Activated naive CD4-positive, alpha-beta T cell treated with anti-CD3 and anti-CD28 coated beads for 36 hours (primary cell): ENCODE measurements at regions of chr14 and their contacts with region 1.

Region 1: GRCh38 chr14:100383727-100384158 is 60.6 kb downstream of the SLC25A47 start:
- DNase-seq: peak; percentile 73
- H3K4me3 Mint-ChIP-seq: no peak overlapping the region
- H3K27ac Mint-ChIP-seq: no peak overlapping the region
- H3K4me1 Mint-ChIP-seq: peaks cover 24% of the 10 kb centered on the region
- H3K27me3 Mint-ChIP-seq: no peaks in the 10 kb centered on the region

Region 2: GRCh38 chr14:100393906-100394732 is 10.4 kb after region 1 on chr14:
- CTCF ChIA-PET with region 1: interaction called, 11 read pairs
- intact Hi-C with region 1: no loop called
- DNase-seq: no peak
- H3K4me3 Mint-ChIP-seq: no peak overlapping the region
- H3K27ac Mint-ChIP-seq: no peak overlapping the region
- H3K4me1 Mint-ChIP-seq: peaks cover 3% of the 10 kb centered on the region
- H3K27me3 Mint-ChIP-seq: no peaks in the 10 kb centered on the region

Region 3: DNA sequence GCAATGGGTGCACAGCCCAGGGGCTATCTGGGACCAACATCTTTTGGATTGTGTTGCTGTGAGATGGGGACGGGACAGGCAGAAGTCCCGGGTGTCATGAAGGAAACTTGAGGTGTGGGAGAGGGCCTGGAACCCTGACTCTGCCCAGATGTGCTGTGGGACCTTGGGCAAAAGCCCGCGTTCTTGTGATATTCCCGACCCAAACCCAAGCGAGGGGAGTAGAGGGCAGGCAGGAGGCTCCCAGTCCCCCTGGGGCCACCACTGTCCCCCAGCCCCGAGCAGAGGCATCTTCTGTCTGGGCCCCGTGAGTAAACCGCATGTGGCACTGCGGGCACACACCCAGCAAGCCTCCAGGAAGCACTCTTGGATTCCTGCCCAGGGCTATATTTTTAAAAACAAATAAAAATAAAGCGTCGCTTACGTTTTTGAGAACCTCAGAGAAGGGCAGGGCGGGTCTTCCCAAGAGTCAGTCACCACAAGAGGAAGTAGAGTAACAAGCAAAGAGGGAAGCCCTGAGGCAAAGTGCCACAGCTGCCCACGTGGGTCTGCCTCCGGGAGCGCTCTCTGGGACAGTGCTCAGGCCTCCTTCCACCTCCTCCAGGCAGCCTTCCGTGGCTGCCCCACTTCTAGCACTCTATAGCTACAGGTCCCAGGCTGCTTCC is 164.0 kb after region 1 on chr14:
- CTCF ChIA-PET with region 1: interaction called, 3 read pairs
- intact Hi-C with region 1: loop called (anchors 2 kb)
- DNase-seq: peak; percentile 64
- H3K4me3 Mint-ChIP-seq: peak overlapping the region; percentile 84
- H3K27ac Mint-ChIP-seq: no peak overlapping the region
- H3K4me1 Mint-ChIP-seq: peaks cover 26% of the 10 kb centered on the region
- H3K27me3 Mint-ChIP-seq: no peaks in the 10 kb centered on the region

Region 4: DNA sequence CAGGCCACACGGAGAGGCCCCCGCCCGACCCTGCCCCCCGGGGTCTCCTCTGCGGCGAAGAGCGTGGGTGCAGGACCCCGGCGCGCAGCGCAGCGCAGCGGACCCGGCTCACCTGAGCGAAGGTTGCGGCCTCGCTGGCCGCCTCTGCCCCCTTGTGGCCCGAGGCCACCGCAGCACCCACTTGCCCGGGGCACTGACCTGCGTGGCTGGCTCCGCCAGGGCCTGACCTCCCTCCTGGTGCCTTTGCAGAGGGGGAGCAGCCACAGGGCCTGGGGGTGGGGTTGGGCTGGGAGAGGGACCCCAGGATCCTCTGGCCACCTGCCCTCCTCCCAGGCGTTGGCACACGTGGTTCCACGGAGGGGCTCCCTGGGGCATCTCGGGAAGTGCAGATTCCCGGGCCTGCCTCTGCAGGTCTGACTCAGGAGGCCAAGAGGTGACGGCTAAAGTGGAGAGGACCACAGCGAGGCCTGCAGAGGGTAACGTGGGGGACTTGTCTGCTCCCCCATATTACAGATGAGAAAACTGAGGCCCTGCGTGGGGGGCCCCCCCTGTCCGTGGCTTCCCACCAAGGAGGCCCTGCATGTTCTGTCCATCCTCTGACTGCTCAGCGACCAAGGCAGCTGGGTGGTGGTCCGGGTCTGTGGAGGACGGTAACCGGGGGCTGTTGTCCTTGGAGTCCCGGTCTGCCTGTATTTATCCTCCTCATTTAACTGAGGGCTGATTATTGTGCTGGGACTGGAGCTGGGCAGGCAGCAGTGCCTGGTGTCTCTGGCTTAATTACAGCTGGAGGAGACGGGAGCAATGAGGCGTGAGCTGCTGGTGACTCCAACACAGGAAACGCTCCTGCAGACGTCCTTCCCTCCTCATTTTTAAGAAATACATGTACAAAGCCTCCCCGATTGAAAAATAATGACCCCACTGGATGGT is 271.3 kb after region 1 on chr14:
- CTCF ChIA-PET with region 1: interaction called, 19 read pairs
- intact Hi-C with region 1: no loop called
- DNase-seq: peak; percentile 47
- H3K4me3 Mint-ChIP-seq: no peak overlapping the region
- H3K27ac Mint-ChIP-seq: no peak overlapping the region
- H3K4me1 Mint-ChIP-seq: peaks cover 6% of the 10 kb centered on the region
- H3K27me3 Mint-ChIP-seq: peaks cover 13% of the 10 kb centered on the region

Region 5: DNA sequence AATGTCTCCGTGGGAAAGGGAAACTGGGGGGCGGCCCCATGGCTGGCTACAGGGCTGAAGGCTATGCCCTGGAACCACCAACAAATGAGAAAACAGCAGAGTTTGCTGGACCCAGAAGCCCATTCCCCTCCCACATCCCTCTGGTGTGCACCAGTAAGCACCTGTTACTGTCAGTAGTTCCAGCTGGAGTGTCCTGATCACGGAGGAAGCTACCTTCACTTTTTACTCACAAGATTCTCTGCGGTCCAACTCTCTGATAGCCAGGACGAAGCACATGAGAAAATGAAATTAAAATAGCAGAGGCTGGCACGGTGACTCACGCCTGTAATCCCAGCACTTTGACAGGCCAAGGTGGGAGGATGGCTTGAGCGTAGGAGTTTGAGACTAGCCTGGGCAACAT is 419.5 kb after region 1 on chr14:
- CTCF ChIA-PET with region 1: no interaction called
- intact Hi-C with region 1: no loop called
- DNase-seq: no peak
- H3K4me3 Mint-ChIP-seq: no peak overlapping the region
- H3K27ac Mint-ChIP-seq: no peak overlapping the region
- H3K4me1 Mint-ChIP-seq: no peaks in the 10 kb centered on the region
- H3K27me3 Mint-ChIP-seq: peaks cover 2% of the 10 kb centered on the region